IMR-90 (cell line): ENCODE measurements at regions of chr20 and their contacts with region 1.

Region 1: GRCh38 chr20:9290331-9290730 is 221.4 kb downstream of the PLCB4 start:
- DNase-seq: no peak
- ATAC-seq: no peak
- H3K4me3 ChIP-seq: no peak overlapping the region
- H3K27ac ChIP-seq: no peak overlapping the region
- H3K4me1 ChIP-seq: peaks cover 8% of the 10 kb centered on the region
- H3K27me3 ChIP-seq: no peaks in the 10 kb centered on the region
- CTCF ChIP-seq: no peak
- POLR2A ChIP-seq: no peak
- RAD21 ChIP-seq: no peak

Region 2: DNA sequence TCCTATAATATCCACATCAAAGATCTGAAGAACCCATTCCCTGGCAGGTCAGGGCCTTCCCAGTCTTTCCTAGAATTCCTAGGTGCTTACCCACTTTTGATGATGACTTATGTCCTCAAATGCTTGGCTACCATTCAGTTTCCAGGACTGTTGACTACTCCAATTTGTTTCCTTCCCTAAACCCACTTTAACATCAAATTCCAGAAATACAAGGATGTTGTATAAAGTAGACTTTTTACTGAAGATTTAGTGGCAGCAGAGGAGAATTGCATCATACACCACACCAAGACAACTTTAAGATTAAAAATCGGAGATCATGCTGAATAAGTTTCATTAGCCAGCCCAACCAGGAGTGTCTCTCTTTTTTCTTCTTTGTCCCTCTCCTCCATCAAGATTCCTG is 20.8 kb after region 1 on chr20:
- CTCF ChIA-PET with region 1: no interaction called
- POLR2A ChIA-PET with region 1: no interaction called
- dilution Hi-C with region 1: no loop called
- in situ Hi-C with region 1: no loop called
- intact Hi-C with region 1: loop called (anchors 2 kb)
- DNase-seq: peak; percentile 24
- ATAC-seq: no peak
- H3K4me3 ChIP-seq: no peak overlapping the region
- H3K27ac ChIP-seq: peak overlapping the region; percentile 26; the same call in 1 of the 2 replicates
- H3K4me1 ChIP-seq: peaks cover 14% of the 10 kb centered on the region
- H3K27me3 ChIP-seq: no peaks in the 10 kb centered on the region
- CTCF ChIP-seq: no peak
- POLR2A ChIP-seq: no peak
- RAD21 ChIP-seq: no peak